Prostate gland (tissue), 2 donors: ENCODE measurements at regions of chr2 and their contacts with region 1.

Region 1: GRCh38 chr2:39593439-39594393 is 72.0 kb upstream of the TMEM178A start:
- DNase-seq: peak; percentile 39
- H3K4me3 ChIP-seq: no peak overlapping the region
- H3K27ac ChIP-seq: no peak overlapping the region
- H3K4me1 ChIP-seq: no peaks in the 10 kb centered on the region
- H3K27me3 ChIP-seq: no peaks in the 10 kb centered on the region
- CTCF ChIP-seq: peak in 3 of 4 experiments; percentile 60 to 68 (median 64)
- POLR2A ChIP-seq: no peak

Region 2: GRCh38 chr2:39488450-39488849 is 105.3 kb before region 1 on chr2:
- intact Hi-C with region 1: no loop called
- DNase-seq: no peak
- H3K4me3 ChIP-seq: no peak overlapping the region
- H3K27ac ChIP-seq: no peak overlapping the region
- H3K4me1 ChIP-seq: no peaks in the 10 kb centered on the region
- H3K27me3 ChIP-seq: no peaks in the 10 kb centered on the region
- CTCF ChIP-seq: no peak
- POLR2A ChIP-seq: no peak

Region 3: GRCh38 chr2:39696838-39697237 is 103.1 kb after region 1 on chr2:
- intact Hi-C with region 1: loop called (anchors 5 kb)
- DNase-seq: no peak
- H3K4me3 ChIP-seq: no peak overlapping the region
- H3K27ac ChIP-seq: no peak overlapping the region
- H3K4me1 ChIP-seq: no peaks in the 10 kb centered on the region
- H3K27me3 ChIP-seq: no peaks in the 10 kb centered on the region
- CTCF ChIP-seq: peak in 3 of 4 experiments; percentile 36 to 64 (median 54)
- POLR2A ChIP-seq: no peak

Region 4: DNA sequence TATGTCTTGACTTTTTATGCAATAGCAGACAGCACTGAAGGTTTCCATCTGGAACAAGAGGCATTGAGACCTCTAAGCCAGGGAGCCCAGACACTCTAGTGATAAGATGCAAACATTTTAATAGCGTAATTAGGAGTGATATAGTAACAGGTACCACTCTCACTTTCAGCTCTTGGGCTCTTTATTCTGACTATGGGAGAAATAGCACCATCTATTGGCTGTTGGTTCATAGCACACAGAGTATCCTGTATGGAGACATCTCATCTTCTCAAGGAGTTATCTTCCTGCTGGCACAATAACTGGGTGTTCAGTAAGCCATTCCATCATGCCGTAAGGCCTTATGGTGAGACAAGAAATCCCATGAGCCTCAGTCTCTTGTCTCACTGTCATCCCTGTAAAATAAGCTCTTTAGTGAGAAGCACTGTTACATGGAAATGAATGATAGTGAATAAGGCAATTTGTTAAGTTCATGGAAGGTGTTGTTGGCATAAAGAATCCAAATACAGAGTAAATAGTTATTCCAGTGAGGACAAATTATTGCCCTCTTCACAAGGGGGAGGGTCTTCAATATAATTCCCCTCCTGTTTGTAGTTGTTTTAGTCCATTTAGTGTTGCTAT is 137.1 kb after region 1 on chr2:
- intact Hi-C with region 1: loop called (anchors 10 kb)
- DNase-seq: no peak
- H3K4me3 ChIP-seq: no peak overlapping the region
- H3K27ac ChIP-seq: no peak overlapping the region
- H3K4me1 ChIP-seq: no peaks in the 10 kb centered on the region
- H3K27me3 ChIP-seq: no peaks in the 10 kb centered on the region
- CTCF ChIP-seq: peak in 3 of 4 experiments; percentile 30 to 51 (median 45)
- POLR2A ChIP-seq: no peak